Heart right ventricle (tissue), 16 donors: ENCODE measurements at regions of chr3 and their contacts with region 1.

Region 1: GRCh38 chr3:197224034-197224444 is 74.4 kb downstream of the DLG1 start:
- DNase-seq: no peak
- ATAC-seq: peak in 3 of 8 donors; percentile 48 to 63 (median 61)
- H3K4me3 ChIP-seq: no peak overlapping the region
- H3K27ac ChIP-seq: no peak overlapping the region
- H3K4me1 ChIP-seq: peaks cover 0 to 59% (median 34%) of the 10 kb centered on the region in 9 donors
- H3K27me3 ChIP-seq: no peaks in the 10 kb centered on the region
- CTCF ChIP-seq: peak; percentile 7 to 69 (median 60)

Region 2: GRCh38 chr3:196803891-196804468 is 420.1 kb before region 1 on chr3:
- intact Hi-C with region 1: no loop called
- DNase-seq: no peak
- ATAC-seq: no peak
- H3K4me3 ChIP-seq: no peak overlapping the region
- H3K27ac ChIP-seq: no peak overlapping the region
- H3K4me1 ChIP-seq: no peaks in the 10 kb centered on the region
- H3K27me3 ChIP-seq: no peaks in the 10 kb centered on the region
- CTCF ChIP-seq: no peak

Region 3: DNA sequence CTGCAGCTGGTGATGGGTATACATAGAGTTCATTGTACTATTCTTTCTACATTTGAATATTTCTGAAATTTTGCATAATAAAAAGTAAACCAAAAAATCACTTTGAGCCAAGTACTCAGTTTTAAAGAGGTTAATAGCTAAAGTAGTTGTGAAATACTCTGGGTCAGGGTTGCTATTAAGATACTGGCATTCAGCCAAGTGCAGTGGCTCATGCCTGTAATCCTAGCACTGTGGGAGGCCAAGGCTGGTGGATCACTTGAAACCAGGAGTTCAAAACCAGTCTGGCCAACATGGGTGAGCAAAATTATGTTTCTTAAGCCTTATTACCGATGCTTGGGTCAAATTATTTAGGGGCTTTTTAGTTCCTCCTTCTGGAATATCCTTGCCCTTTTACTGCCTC is 72.5 kb before region 1 on chr3:
- intact Hi-C with region 1: no loop called
- DNase-seq: peak in 1 of 2 donors; percentile 20
- ATAC-seq: peak in 7 of 8 donors; percentile 64 to 92 (median 72)
- H3K4me3 ChIP-seq: no peak overlapping the region
- H3K27ac ChIP-seq: peak overlapping the region in 1 of 10 donors; percentile 1
- H3K4me1 ChIP-seq: peaks cover 0 to 24% (median 7%) of the 10 kb centered on the region in 9 donors
- H3K27me3 ChIP-seq: no peaks in the 10 kb centered on the region
- CTCF ChIP-seq: no peak

Region 4: DNA sequence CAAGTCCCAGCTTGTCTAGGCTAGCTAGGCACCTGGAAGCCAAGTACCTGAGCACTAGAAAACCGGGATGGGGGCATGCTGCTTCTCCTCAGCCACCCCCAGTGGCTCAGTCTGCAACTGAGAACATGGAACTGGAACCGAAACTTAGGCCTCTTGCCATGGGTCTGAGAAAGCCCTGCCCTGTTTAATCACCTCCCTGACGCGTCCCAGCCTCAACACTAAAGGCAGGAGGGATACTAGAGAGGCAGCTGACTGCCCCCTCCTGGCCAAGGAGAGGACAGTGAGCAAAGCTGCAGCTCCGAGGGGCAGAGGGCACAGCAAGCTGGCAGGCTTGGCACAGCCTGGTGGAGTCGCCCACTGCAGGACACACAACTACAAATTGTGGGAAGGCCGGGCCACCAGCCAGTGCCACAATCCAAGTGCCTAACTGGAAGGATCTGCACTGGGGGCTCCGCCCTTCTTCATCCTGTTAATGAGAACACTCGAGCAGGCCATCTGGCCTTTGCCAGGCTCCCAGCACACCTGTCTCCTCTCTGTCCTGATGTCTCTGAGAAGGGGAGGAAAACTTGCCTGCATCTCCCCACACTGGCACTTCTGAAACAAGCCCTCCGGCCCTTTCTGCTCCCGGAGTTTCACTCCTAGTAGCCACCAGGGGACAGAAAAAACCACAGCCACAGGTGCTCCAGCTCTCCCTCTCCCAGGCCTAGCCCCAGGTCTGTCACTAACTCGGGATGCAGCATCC is 278.0 kb after region 1 on chr3:
- intact Hi-C with region 1: loop called in 3 of 10 experiments (anchors 10 kb)
- DNase-seq: no peak
- ATAC-seq: peak in 6 of 8 donors; percentile 21 to 61 (median 52)
- H3K4me3 ChIP-seq: no peak overlapping the region
- H3K27ac ChIP-seq: no peak overlapping the region
- H3K4me1 ChIP-seq: no peaks in the 10 kb centered on the region
- H3K27me3 ChIP-seq: peaks cover 0 to 6% (median 0%) of the 10 kb centered on the region in 7 donors
- CTCF ChIP-seq: peak in 8 of 9 donors; percentile 9 to 63 (median 42)

Region 5: GRCh38 chr3:197511130-197511529 is 287.1 kb after region 1 on chr3:
- intact Hi-C with region 1: loop called in 5 of 10 experiments (anchors 1 to 10 kb)
- DNase-seq: no peak
- ATAC-seq: no peak
- H3K4me3 ChIP-seq: no peak overlapping the region
- H3K27ac ChIP-seq: no peak overlapping the region
- H3K4me1 ChIP-seq: peaks cover 0 to 11% (median 8%) of the 10 kb centered on the region in 9 donors
- H3K27me3 ChIP-seq: peaks cover 0 to 1% (median 0%) of the 10 kb centered on the region in 7 donors
- CTCF ChIP-seq: no peak

Region 6: DNA sequence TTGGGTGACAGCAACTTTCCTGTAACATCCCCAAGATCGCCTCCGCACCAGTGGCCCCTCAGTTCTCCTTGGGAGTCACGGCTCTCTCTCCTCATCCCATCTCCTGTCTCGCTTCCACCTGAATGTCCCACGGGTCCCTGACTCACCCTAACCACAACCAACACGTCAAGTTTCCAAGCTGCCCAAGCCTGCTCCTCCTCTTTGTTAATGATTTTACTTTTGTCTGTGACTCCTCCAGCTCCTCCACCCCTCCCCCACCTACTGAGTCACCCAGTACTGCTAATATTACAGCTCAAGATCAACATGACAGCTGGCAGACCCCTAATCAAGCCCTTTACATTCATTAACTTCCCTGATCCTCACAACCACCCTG is 292.5 kb after region 1 on chr3:
- intact Hi-C with region 1: loop called in 1 of 10 experiments (anchors 10 kb)
- DNase-seq: no peak
- ATAC-seq: no peak
- H3K4me3 ChIP-seq: no peak overlapping the region
- H3K27ac ChIP-seq: no peak overlapping the region
- H3K4me1 ChIP-seq: peaks cover 0 to 8% (median 0%) of the 10 kb centered on the region in 9 donors
- H3K27me3 ChIP-seq: no peaks in the 10 kb centered on the region
- CTCF ChIP-seq: no peak